Activated T-helper 2 cell treated with anti-CD3 and anti-CD28 coated beads, Interferon-gamma antibody, Interleukin-2, Interleukin-4, amounts not matched to agents 10 μg/mL and 5 μg/mL and 100 μg/mL, durations not matched to agents 14 hours and 24 hours and 36 hours (primary cell): ENCODE measurements at regions of chr17 and their contacts with region 1.

Region 1: DNA sequence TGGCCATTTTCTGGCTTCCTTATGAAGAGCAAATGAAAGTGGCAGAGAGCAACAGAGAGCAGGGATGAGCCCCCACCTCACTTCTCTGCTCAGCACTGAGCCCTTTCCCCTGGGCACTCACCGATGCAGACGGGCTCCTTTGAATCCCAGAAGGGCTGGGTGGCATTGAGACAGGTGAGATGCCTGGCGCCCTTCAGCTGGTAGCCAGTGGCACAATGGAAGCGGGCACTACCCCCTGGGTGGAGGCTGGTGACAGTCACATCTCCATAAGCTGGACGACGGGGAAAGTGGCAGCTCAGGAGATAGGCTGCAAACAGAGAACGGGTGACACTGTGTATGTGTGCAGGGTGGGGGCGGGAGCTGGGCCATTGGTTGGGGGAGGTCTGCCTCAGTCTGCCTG is 12.5 kb upstream of the PHF12 start:
- DNase-seq: no peak
- H3K4me3 Mint-ChIP-seq: no peak overlapping the region
- H3K27ac Mint-ChIP-seq: no peak overlapping the region
- H3K4me1 Mint-ChIP-seq: no peaks in the 10 kb centered on the region
- H3K27me3 Mint-ChIP-seq: peaks cover 9% of the 10 kb centered on the region

Region 2: GRCh38 chr17:29019475-29020181 is 55.8 kb after region 1 on chr17:
- intact Hi-C with region 1: no loop called
- DNase-seq: no peak
- H3K4me3 Mint-ChIP-seq: no peak overlapping the region
- H3K27ac Mint-ChIP-seq: no peak overlapping the region
- H3K4me1 Mint-ChIP-seq: peaks cover 4% of the 10 kb centered on the region
- H3K27me3 Mint-ChIP-seq: peaks cover 57% of the 10 kb centered on the region

Region 3: DNA sequence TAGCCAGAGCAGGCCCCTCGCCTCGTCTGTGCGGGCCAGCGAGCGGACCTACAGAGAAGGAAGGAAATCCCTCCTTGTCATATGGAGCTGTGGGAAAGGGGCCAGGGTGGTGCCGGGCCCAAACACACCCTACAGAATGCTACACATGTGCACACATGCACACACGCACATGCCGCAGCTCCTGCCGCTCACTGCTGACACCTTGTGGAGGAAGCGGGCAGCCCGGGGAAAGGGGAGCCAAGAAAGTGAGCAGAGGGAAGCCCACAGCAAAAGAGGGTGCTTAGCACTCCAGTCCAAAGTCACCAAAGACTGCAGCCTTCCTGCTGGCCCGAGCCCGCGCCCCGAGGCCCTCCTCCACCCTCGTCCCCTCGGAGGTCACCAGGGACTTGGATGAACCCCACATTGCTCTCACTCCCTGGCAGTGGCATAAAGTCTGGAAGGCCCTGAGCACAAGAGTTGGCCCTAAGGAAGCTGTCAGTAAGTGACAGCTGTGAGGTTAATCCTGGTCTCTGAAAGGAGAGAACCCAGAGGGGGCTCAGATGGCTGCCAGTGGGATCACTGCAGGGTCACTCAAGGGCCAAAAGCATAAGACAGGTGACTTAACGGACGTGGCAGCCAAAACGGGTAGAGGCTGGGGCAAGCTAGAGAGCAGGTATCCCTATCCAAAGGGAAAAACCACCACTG is 148.1 kb after region 1 on chr17:
- intact Hi-C with region 1: loop called (anchors 2 kb)
- DNase-seq: peak; percentile 48
- H3K4me3 Mint-ChIP-seq: no peak overlapping the region
- H3K27ac Mint-ChIP-seq: no peak overlapping the region
- H3K4me1 Mint-ChIP-seq: peaks cover 2% of the 10 kb centered on the region
- H3K27me3 Mint-ChIP-seq: no peaks in the 10 kb centered on the region